Naive thymus-derived CD4-positive, alpha-beta T cell (primary cell): ENCODE measurements at regions of chr3 and their contacts with region 1.

Region 1: DNA sequence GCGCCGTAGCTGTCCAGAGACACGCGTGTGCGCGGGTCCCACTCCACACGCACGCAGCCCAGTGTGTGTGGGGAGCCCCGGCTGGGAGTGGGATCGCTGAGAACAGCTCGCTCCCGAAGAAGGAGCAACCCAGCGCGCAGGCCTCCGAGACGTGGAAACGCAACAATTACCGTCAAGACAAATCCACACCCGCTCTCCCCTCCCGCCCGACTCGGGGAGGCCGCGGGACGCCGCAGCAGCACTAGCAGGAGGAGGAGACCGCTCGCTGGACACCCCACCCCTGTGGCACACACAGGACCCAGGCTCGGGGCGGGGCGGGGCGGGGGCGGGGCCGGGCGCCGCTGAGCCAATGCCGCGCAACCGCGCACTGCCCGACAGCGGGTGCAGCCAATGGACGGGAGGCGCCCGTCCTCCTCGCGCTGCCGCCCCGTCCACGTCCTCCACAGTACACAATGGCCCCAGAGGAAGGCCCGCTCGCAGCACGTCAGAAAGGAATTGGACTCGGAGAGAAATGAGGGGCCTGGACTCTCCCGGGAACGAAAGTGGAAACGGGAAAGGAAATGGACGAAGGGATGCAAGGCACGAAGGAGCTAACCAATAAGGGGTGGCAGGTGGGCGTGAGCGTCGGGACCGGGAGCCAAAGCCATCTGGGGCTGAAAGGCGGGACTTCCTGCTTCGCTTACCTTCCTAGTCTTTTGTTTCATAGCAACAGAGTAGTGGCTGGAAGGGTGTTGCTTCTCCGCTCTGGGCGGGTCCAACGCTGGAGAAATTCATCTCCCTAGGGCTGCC is at the start of gene CBLB:
- DNase-seq: peak; percentile 72 to 89 (median 85)
- ATAC-seq: peak; percentile 93
- H3K4me3 ChIP-seq: peak within 1 kb of the TSS; percentile 86
- H3K4me3 Mint-ChIP-seq: peak within 1 kb of the TSS; percentile 89 to 100 (median 97)
- H3K27ac ChIP-seq: peak within 1 kb of the TSS; percentile 91
- H3K27ac Mint-ChIP-seq: peak within 1 kb of the TSS; percentile 89 to 98 (median 94)
- H3K4me1 ChIP-seq: peaks cover 31 to 41% of the 10 kb centered on the region in 2 donors
- H3K4me1 Mint-ChIP-seq: peaks cover 23 to 58% (median 49%) of the 10 kb centered on the region in 7 donors
- H3K27me3 ChIP-seq: no peaks in the 10 kb centered on the region
- H3K27me3 Mint-ChIP-seq: no peaks in the 10 kb centered on the region
- total RNA-seq, gene CBLB: 82.8 to 135 (median 109) TPM

Region 2: GRCh38 chr3:105806361-105806760 is 62.6 kb before region 1 on chr3:
- CTCF ChIA-PET with region 1: interaction called, 3 read pairs
- POLR2A ChIA-PET with region 1: interaction called, 5 read pairs
- intact Hi-C with region 1: loop called in 1 of 2 experiments (anchors 1 kb)
- DNase-seq: no peak
- ATAC-seq: peak; percentile 78
- H3K4me3 ChIP-seq: no peak overlapping the region
- H3K4me3 Mint-ChIP-seq: peak overlapping the region in 1 of 10 donors; percentile 11
- H3K27ac ChIP-seq: no peak overlapping the region
- H3K27ac Mint-ChIP-seq: peak overlapping the region in 4 of 9 donors; percentile 0 to 85 (median 44)
- H3K4me1 ChIP-seq: peaks cover 11 to 23% of the 10 kb centered on the region in 2 donors
- H3K4me1 Mint-ChIP-seq: peaks cover 39 to 86% (median 65%) of the 10 kb centered on the region in 7 donors
- H3K27me3 ChIP-seq: no peaks in the 10 kb centered on the region
- H3K27me3 Mint-ChIP-seq: no peaks in the 10 kb centered on the region

Region 3: GRCh38 chr3:105845488-105845887 is 23.4 kb before region 1 on chr3:
- CTCF ChIA-PET with region 1: no interaction called
- POLR2A ChIA-PET with region 1: interaction called, 3 read pairs
- intact Hi-C with region 1: loop called (anchors 1 to 2 kb)
- DNase-seq: no peak
- ATAC-seq: no peak
- H3K4me3 ChIP-seq: no peak overlapping the region
- H3K4me3 Mint-ChIP-seq: peak overlapping the region in 6 of 10 donors; percentile 11 to 46 (median 26)
- H3K27ac ChIP-seq: no peak overlapping the region
- H3K27ac Mint-ChIP-seq: peak overlapping the region in 5 of 9 donors; percentile 22 to 42 (median 26)
- H3K4me1 ChIP-seq: peaks cover 17 to 32% of the 10 kb centered on the region in 2 donors
- H3K4me1 Mint-ChIP-seq: peaks cover 16 to 75% (median 51%) of the 10 kb centered on the region in 7 donors
- H3K27me3 ChIP-seq: no peaks in the 10 kb centered on the region
- H3K27me3 Mint-ChIP-seq: no peaks in the 10 kb centered on the region

Region 4: GRCh38 chr3:106013971-106014370 is 145.0 kb after region 1 on chr3:
- CTCF ChIA-PET with region 1: no interaction called
- POLR2A ChIA-PET with region 1: no interaction called
- intact Hi-C with region 1: loop called in 1 of 2 experiments (anchors 5 kb)
- DNase-seq: no peak
- ATAC-seq: no peak
- H3K4me3 ChIP-seq: no peak overlapping the region
- H3K4me3 Mint-ChIP-seq: no peak overlapping the region
- H3K27ac ChIP-seq: no peak overlapping the region
- H3K27ac Mint-ChIP-seq: no peak overlapping the region
- H3K4me1 ChIP-seq: peaks cover 0 to 5% of the 10 kb centered on the region in 2 donors
- H3K4me1 Mint-ChIP-seq: peaks cover 9 to 25% (median 13%) of the 10 kb centered on the region in 7 donors
- H3K27me3 ChIP-seq: no peaks in the 10 kb centered on the region
- H3K27me3 Mint-ChIP-seq: no peaks in the 10 kb centered on the region

Region 5: DNA sequence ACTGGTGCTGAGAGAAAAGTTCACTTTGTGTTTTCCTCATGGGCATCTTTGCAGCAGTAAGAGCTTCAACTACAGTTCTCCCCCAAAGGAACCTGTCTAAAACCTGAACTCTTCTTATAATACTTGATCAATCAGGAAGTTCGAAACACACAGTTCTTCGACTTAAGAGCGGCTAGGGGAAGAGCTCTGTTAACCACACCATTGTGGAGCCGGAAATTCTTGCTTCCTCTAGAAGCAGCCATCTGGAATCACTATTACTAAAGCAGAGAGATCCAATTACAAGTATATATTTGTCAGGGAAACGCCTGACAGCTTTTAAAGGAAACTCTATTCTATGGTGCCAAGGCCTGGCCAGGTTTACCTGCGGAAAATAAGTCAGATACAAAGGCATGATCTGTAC is 337.2 kb after region 1 on chr3:
- CTCF ChIA-PET with region 1: interaction called, 5 read pairs
- POLR2A ChIA-PET with region 1: no interaction called
- intact Hi-C with region 1: loop called (anchors 1 to 2 kb)
- DNase-seq: peak in 7 of 9 donors; percentile 12 to 48 (median 36)
- ATAC-seq: peak; percentile 81
- H3K4me3 ChIP-seq: peak overlapping the region; percentile 19
- H3K4me3 Mint-ChIP-seq: peak overlapping the region; percentile 51 to 79 (median 72)
- H3K27ac ChIP-seq: peak overlapping the region; percentile 32
- H3K27ac Mint-ChIP-seq: peak overlapping the region; percentile 3 to 91 (median 76)
- H3K4me1 ChIP-seq: peaks cover 14 to 18% of the 10 kb centered on the region in 2 donors
- H3K4me1 Mint-ChIP-seq: peaks cover 13 to 47% (median 40%) of the 10 kb centered on the region in 7 donors
- H3K27me3 ChIP-seq: no peaks in the 10 kb centered on the region
- H3K27me3 Mint-ChIP-seq: no peaks in the 10 kb centered on the region

Region 6: GRCh38 chr3:106609666-106610301 is 740.8 kb after region 1 on chr3:
- CTCF ChIA-PET with region 1: interaction called, 3 read pairs
- POLR2A ChIA-PET with region 1: no interaction called
- intact Hi-C with region 1: loop called (anchors 1 to 5 kb)
- DNase-seq: peak in 8 of 9 donors; percentile 37 to 71 (median 60)
- ATAC-seq: peak; percentile 81
- H3K4me3 ChIP-seq: no peak overlapping the region
- H3K4me3 Mint-ChIP-seq: no peak overlapping the region
- H3K27ac ChIP-seq: no peak overlapping the region
- H3K27ac Mint-ChIP-seq: no peak overlapping the region
- H3K4me1 ChIP-seq: no peaks in the 10 kb centered on the region
- H3K4me1 Mint-ChIP-seq: peaks cover 0 to 12% (median 0%) of the 10 kb centered on the region in 7 donors
- H3K27me3 ChIP-seq: no peaks in the 10 kb centered on the region
- H3K27me3 Mint-ChIP-seq: peaks cover 0 to 4% (median 3%) of the 10 kb centered on the region in 5 donors